Mammary epithelial cell (primary cell): ENCODE measurements at regions of chr22 and their contacts with region 1.

Region 1: DNA sequence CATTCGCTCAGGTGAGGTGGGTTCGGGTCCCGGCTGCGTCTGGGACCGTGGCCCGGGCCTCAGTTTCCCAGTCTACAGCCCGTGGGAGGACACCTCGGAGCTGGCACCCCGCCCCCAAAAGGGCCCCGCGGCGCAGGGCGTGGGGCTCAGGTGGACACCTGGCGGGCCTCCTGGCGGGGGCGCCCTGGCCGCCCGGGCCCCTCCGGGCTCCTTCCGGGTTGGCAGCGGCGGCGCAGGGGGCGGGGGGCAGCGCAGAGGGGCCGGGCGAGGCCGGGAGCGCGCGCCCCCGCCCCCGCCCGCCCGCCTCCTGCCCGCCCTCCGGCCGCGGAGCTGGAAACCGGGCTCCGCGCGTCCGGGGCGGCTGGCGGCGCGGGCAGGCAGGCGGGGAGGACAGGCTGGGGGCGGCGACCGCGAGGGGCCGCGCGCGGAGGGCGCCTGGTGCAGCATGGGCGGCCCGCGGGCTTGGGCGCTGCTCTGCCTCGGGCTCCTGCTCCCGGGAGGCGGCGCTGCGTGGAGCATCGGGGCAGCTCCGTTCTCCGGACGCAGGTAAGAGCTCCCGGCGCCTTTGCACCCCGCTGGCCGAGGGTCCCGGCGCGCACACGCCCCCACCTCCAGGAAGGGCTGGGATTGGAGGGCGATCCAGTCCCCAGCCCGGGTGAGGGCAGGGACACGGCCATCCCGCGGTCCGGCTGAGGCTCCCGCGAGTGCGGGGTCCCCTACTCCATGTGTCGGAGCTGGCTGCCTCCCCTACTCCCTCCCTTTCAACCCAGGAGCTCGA is at the start of gene EMID1:
- DNase-seq: no peak
- H3K4me3 ChIP-seq: peak within 1 kb of the TSS in 2 of 3 experiments; percentile 38 to 40
- H3K27ac ChIP-seq: no peak within 1 kb of the TSS
- H3K4me1 ChIP-seq: peaks cover 3% of the 10 kb centered on the region
- H3K27me3 ChIP-seq: peaks cover 12% of the 10 kb centered on the region
- CTCF ChIP-seq: peak in 1 of 2 donors; percentile 15
- total RNA-seq, gene EMID1: 0.67 TPM in 1 of 2 donors, not detected in the other

Region 2: GRCh38 chr22:29112102-29112501 is 93.7 kb before region 1 on chr22:
- CTCF ChIA-PET with region 1: no interaction called
- dilution Hi-C with region 1: loop called (anchors 5 kb)
- in situ Hi-C with region 1: no loop called
- intact Hi-C with region 1: no loop called
- DNase-seq: no peak
- H3K4me3 ChIP-seq: no peak overlapping the region
- H3K27ac ChIP-seq: no peak overlapping the region
- H3K4me1 ChIP-seq: peaks cover 14% of the 10 kb centered on the region
- H3K27me3 ChIP-seq: no peaks in the 10 kb centered on the region
- CTCF ChIP-seq: no peak